GM18951 (cell line): ENCODE measurements at regions of chr19 and their contacts with region 1.

Region 1: DNA sequence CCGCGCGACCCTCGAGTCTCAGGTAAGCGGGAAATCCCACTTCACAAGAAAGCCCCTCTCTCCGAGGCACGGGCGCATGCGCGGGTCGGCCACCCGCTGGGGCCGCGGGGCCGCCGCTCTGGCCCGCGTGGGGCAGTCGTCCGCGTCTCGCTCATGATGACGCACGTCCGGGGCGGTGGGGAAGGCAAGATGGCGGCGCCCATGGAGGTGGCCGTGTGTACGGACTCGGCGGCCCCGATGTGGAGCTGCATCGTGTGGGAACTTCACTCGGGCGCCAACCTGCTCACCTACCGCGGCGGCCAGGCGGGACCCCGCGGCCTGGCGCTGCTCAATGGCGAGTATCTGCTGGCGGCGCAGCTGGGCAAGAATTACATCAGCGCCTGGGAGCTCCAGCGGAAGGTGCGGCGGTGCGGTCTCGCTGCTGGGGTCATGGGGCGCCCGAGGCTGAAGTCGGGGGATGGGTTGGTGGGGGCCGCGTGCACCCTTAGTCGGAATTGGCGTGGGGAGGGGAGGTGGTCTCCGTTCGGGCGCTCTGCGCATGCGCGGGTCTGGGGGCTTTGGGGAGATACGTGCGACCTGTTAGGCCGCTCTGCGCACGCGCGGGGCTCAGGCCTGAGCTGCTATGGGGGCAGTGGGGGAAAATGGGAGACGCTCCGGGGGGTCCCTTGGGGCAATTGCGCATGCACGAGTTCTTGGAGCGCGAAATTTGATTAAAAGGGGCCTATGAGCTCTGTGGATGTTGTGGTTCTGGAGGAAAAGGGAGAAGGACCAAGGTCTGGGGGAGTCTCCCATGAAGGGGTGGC is at the start of gene WDR18:
- POLR2A ChIP-seq: peak; percentile 76

Region 2: GRCh38 chr19:771332-771785 is 213.0 kb before region 1 on chr19:
- in situ Hi-C with region 1: loop called (anchors 25 kb)
- POLR2A ChIP-seq: no peak

Region 3: GRCh38 chr19:850221-850978 is 134.0 kb before region 1 on chr19:
- in situ Hi-C with region 1: no loop called
- POLR2A ChIP-seq: no peak

Region 4: DNA sequence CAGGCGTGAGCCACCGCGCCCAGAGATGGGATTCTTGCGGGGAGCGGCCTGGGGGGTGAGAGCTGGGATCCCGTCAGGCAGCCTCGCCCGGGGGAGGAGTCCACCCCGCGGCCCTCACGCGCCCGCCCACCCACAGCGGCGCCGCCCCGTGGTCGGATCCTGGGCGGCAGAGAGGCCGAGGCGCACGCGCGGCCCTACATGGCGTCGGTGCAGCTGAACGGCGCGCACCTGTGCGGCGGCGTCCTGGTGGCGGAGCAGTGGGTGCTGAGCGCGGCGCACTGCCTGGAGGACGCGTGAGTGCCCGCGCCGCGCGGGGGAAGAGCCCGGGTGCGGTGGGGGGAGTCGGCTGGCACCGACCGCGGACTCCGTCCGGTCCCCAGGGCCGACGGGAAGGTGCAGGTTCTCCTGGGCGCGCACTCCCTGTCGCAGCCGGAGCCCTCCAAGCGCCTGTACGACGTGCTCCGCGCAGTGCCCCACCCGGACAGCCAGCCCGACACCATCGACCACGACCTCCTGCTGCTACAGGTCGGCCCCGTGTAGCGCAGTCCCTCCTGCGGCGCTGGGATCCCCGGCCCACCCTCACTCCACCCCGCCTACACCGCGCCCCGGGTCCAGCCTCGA is 123.8 kb before region 1 on chr19:
- in situ Hi-C with region 1: loop called (anchors 10 kb)
- POLR2A ChIP-seq: peak; percentile 31

Region 5: DNA sequence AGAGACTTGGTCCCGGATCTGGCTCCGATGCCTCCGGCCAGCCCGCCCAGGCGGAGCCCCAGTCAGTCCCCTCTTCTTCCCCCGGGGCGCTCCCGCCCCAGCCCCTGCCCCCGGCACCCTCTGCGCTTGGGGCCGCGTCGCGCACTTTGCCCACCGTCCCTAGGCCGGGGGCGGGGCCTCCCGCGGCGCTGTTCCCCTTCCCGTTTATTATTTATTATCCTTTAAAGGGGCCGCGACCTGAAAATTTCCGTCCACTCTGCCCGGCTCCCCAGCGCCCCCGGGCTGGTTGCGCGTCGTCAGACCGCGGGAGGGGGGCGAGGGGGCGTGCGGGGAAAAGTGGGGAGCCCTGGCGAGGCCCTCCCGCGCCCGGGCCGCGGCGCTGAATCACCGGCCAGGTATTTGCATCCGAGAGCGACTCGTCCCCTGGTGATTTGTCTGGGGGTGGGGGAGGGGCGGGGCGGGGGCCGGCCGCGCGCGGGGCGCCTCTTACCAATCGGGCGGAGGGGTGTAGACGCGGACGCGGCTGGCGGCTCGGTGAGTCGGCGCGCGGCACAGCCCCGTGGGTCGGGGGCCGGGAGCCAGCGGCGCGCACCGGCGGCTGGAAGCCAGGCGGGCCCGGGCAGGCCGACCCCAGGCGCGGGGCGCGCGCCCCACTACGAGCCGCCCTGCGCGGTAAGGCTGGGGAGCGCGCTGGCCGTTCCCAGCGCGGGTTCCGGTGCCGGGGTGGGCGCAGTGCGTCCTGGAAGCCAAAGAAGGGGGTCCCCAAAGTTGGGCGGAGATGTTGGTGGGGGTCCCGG is 58.6 kb before region 1 on chr19 and contains the start of gene ARID3A:
- in situ Hi-C with region 1: loop called (anchors 5 kb)
- POLR2A ChIP-seq: peak; percentile 62

Region 6: GRCh38 chr19:937259-937694 is 47.1 kb before region 1 on chr19:
- in situ Hi-C with region 1: no loop called
- POLR2A ChIP-seq: no peak